ENCODE measurements at regions of chr9 and their contacts with region 1.

Region 1: DNA sequence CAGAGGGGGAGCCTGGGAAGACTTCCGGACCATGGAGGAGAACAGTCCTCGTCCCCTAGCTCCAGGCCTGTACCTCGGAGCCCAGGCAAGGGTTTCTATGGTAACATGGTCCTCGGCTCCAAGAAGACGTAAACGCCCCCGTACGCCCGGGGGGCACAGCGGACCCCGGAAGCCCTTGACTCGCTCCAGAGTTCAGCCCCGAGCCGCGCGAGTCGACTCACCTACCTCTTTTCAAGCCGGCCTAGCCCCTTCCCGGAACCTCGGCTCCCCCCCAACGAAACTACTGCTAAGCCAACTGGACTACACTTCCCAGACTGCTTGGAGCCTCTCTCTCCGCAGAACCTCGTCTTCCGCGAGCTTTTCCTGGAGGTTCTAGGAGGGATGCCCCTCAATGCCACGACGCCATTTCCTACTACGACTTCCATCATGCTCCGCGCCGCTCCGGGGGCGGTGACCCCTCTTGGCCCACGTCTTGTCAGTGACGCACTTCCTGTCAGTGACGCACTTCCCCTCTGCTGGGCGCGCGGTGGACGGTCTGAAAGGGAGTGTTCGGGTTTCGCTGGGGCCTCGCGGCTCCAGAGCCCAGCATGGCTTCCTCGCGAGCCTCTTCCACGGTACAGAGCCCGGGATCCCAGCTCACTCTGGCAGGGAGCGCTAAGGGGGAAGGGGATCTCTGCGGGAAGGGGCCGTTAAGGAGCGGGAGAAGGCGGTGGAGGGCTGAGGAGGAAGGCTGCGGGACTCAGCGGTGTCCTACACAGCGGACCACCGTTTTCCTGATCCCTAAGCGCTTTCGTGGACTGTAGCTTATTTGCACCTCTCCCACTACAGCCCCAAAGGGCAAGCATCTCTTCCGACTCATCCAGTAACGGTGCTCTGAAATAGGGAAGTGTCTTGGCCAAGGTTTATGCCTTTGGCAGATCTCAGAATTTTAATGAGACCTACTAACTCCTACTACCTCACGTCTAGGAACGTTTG is at the starts of genes CDC26 and PRPF4:
- DNase-seq: peak; percentile 96
- H3K4me3 ChIP-seq: peak within 1 kb of the TSS; percentile 51 to 56
- H3K27ac ChIP-seq: peak within 1 kb of the TSS; percentile 85 to 95
- H3K4me1 ChIP-seq: no peaks in the 10 kb centered on the region
- H3K27me3 ChIP-seq: no peaks in the 10 kb centered on the region
- CTCF ChIP-seq: peak in 2 of 4 experiments; percentile 24 to 30
- POLR2A ChIP-seq: peak; percentile 89
- total RNA-seq, gene CDC26: 17.8 to 21.2 TPM
- total RNA-seq, gene PRPF4: 25.0 to 27.1 TPM

Region 2: DNA sequence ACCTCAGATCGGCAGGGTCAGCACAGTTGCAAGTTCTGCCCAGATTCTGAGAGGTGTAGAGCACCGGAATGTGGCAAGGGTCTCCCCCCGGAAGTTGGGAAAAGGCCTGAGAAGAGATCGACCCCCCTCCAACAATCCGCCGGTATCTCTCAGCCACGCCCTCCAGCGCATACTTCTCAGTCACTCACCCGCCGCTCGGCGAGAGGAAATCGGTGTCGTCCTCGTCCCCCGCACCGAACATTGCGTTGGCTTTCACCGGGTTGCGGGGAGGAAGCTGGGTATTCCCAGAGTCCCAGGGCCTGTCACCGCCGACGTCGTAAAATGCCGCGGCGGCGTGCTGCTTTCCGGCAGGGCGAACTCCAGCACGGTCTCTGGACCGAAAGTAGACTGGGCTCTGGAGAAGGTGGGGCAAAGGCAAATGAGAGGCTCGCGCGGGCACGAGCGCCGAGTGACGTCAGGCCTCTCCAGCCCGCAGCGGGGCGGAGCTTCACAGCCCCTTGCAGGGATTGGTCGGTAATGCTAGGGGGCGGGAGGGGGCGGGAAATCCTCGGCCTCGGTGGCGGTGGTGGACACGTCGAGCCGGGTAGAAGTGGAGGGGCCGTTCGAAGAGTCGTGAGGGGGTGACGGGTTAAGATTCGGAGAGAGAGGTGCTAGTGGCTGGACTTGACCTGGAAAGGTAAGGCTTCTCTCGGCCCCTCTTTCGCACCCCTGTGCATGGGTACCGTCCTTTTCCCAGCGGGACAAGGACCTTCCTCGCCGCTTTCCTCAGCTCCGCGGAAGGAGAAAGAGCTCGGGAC is 54.2 kb before region 1 on chr9 and contains the starts of genes FKBP15 and SLC31A1:
- intact Hi-C with region 1: loop called (anchors 5 kb)
- DNase-seq: peak; percentile 98
- H3K4me3 ChIP-seq: peak within 1 kb of the TSS; percentile 60 to 79
- H3K27ac ChIP-seq: peak within 1 kb of the TSS; percentile 78 to 84
- H3K4me1 ChIP-seq: peaks cover 3% of the 10 kb centered on the region
- H3K27me3 ChIP-seq: no peaks in the 10 kb centered on the region
- CTCF ChIP-seq: peak in 1 of 4 experiments; percentile 46
- POLR2A ChIP-seq: peak; percentile 83
- total RNA-seq, gene FKBP15: 22.5 to 25.7 TPM
- total RNA-seq, gene SLC31A1: 22.8 to 68.5 TPM

Region 3: DNA sequence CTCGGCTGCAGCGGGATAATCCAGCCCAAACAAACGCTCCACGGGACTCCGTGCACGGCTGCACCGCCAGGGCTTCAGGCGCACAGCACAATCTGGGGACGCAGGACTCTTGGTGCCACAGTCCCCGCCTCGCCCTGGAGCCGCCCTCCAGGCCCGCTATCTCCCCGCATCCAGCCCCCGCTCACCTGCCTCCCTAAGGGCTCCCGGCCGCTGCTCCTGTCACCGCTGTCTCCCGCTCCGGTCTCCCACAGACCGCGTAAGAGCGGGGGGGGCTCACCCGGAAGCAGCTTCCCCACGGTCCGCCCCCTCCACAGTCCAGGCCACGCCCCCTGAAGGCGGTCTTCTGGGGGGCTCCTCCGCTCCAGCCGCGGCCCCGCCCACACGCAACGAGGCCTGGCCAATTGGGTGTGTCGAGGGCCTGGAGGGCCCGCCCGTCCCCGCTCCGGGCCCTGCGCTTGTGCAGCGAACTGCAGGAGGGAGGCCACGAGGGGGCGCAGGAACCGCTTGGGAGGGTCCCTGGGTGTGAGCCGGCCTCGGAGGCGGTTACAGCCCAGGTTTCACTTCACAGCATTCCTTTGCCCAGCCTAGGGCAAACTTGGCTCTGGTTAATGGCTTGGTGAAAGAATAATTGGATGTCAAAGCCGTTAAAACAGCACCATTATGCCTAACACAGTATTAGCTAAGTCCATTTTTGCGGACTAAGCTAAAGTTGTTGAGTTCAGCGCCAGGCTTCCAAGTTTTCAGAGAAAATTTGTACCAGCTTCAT is 125.8 kb after region 1 on chr9 and contains the start of gene ALAD:
- intact Hi-C with region 1: loop called (anchors 10 kb)
- DNase-seq: peak; percentile 99
- H3K4me3 ChIP-seq: peak within 1 kb of the TSS; percentile 65 to 89
- H3K27ac ChIP-seq: peak within 1 kb of the TSS; percentile 54 to 76
- H3K4me1 ChIP-seq: no peaks in the 10 kb centered on the region
- H3K27me3 ChIP-seq: no peaks in the 10 kb centered on the region
- CTCF ChIP-seq: peak; percentile 91 to 98 (median 94)
- POLR2A ChIP-seq: peak; percentile 69
- total RNA-seq, gene ALAD: 59.8 to 103 TPM

Region 4: DNA sequence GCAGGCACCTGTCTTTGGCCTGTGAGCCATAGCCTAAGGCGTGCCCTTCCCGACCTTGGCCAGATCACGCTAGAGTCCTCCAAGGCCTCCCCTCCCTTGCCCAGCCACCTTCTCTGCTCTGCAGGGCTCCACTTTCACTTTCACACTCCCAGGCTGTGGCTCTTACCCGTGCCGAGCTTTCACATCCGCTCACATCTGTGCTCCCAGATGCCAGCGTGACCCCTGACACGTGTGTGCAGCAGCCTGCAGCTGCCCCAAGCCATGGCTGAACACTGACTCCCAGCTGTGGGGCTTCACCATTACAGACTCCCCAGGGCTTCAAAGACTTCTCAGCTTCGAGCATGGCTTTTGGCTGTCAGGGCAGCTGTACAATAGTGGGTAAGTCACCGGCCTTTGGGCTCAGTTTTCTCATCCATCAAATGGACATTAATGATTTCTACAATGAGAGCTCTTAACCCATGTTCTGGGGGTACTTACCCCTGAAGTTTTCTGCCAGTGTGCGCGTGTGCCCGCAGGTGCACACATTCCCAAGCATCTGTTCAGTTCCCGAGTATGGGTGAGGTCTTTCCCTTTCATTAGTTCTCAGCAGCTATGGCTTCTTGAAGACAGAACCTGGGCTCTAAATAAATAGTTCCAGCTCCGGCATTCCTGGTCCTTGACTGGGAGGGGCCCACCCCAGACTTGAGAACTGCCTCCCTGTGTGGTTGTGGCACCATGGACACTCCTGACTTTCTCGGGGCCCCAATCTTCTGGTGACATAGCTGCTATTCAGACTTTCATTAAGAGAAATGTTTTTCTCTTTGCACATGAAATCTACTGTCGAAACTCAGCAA is 306.6 kb after region 1 on chr9:
- intact Hi-C with region 1: loop called (anchors 10 kb)
- DNase-seq: peak; percentile 48
- H3K4me3 ChIP-seq: peak overlapping the region in 1 of 2 donors; percentile 8
- H3K27ac ChIP-seq: peak overlapping the region; percentile 80 to 83
- H3K4me1 ChIP-seq: peaks cover 36% of the 10 kb centered on the region
- H3K27me3 ChIP-seq: no peaks in the 10 kb centered on the region
- CTCF ChIP-seq: peak in 1 of 4 experiments; percentile 41
- POLR2A ChIP-seq: no peak

Region 5: GRCh38 chr9:113657703-113658544 is 382.5 kb after region 1 on chr9:
- intact Hi-C with region 1: loop called (anchors 5 kb)
- DNase-seq: peak; percentile 84
- H3K4me3 ChIP-seq: no peak overlapping the region
- H3K27ac ChIP-seq: no peak overlapping the region
- H3K4me1 ChIP-seq: no peaks in the 10 kb centered on the region
- H3K27me3 ChIP-seq: no peaks in the 10 kb centered on the region
- CTCF ChIP-seq: peak; percentile 72 to 95 (median 94)
- POLR2A ChIP-seq: no peak

Measured in prostate gland (tissue), 2 donors.